ENCODE measurements at regions of chr12 and their contacts with region 1.

Region 1: GRCh38 chr12:53746592-53747092 is 5.1 kb downstream of the CISTR start:
- DNase-seq: peak; percentile 94 to 95
- H3K4me3 ChIP-seq: no peak overlapping the region
- H3K27ac ChIP-seq: no peak overlapping the region
- H3K4me1 ChIP-seq: no peaks in the 10 kb centered on the region
- H3K27me3 ChIP-seq: no peaks in the 10 kb centered on the region
- CTCF ChIP-seq: peak; percentile 99 to 100 (median 100)
- POLR2A ChIP-seq: no peak

Region 2: GRCh38 chr12:53543539-53543938 is 203.1 kb before region 1 on chr12:
- intact Hi-C with region 1: loop called (anchors 10 kb)
- DNase-seq: peak; percentile 61 to 66
- H3K4me3 ChIP-seq: no peak overlapping the region
- H3K27ac ChIP-seq: peak overlapping the region; percentile 66 to 85
- H3K4me1 ChIP-seq: no peaks in the 10 kb centered on the region
- H3K27me3 ChIP-seq: no peaks in the 10 kb centered on the region
- CTCF ChIP-seq: peak; percentile 82 to 95 (median 92)
- POLR2A ChIP-seq: no peak

Region 3: GRCh38 chr12:53701518-53702260 is 45.0 kb before region 1 on chr12:
- intact Hi-C with region 1: loop called (anchors 5 kb)
- DNase-seq: peak; percentile 71 to 83
- H3K4me3 ChIP-seq: no peak overlapping the region
- H3K27ac ChIP-seq: no peak overlapping the region
- H3K4me1 ChIP-seq: no peaks in the 10 kb centered on the region
- H3K27me3 ChIP-seq: peaks cover 0 to 18% of the 10 kb centered on the region in 2 donors
- CTCF ChIP-seq: peak; percentile 83 to 93 (median 90)
- POLR2A ChIP-seq: no peak

Region 4: GRCh38 chr12:53856132-53856531 is 109.5 kb after region 1 on chr12:
- intact Hi-C with region 1: no loop called
- DNase-seq: no peak
- H3K4me3 ChIP-seq: no peak overlapping the region
- H3K27ac ChIP-seq: no peak overlapping the region
- H3K4me1 ChIP-seq: no peaks in the 10 kb centered on the region
- H3K27me3 ChIP-seq: no peaks in the 10 kb centered on the region
- CTCF ChIP-seq: no peak
- POLR2A ChIP-seq: no peak

Region 5: DNA sequence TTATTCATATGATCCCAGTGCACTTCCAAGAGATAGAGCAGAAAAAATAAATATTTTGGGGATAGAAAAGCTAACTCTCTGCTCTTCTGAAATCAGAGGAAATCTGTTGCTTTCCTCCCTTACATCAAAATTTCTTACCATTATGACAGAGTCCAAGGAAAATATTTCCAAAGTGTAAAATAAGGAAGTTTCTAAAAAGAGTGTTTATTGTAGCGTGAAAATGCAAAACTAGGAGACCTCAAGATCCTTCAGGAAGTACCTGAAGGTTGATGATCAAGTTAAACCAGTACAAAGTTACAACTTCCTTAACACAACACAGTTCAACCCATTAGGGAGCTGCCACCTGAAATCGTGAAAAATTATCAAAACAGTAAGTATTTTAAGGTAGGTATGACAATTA is 1697.1 kb after region 1 on chr12 and contains the start of gene OR6C2:
- intact Hi-C with region 1: no loop called
- DNase-seq: no peak
- H3K4me3 ChIP-seq: no peak within 1 kb of the TSS
- H3K27ac ChIP-seq: no peak within 1 kb of the TSS
- H3K4me1 ChIP-seq: no peaks in the 10 kb centered on the region
- H3K27me3 ChIP-seq: no peaks in the 10 kb centered on the region
- CTCF ChIP-seq: no peak
- POLR2A ChIP-seq: no peak
- total RNA-seq, gene OR6C2: not detected

Measured in uterus (tissue), 4 donors.